ENCODE measurements at regions of chr22 and their contacts with region 1.

Region 1: GRCh38 chr22:28019881-28020871 is 101.1 kb upstream of the PITPNB start:
- DNase-seq: peak; percentile 65
- H3K4me3 Mint-ChIP-seq: no peak overlapping the region
- H3K27ac Mint-ChIP-seq: no peak overlapping the region
- H3K4me1 Mint-ChIP-seq: peaks cover 9% of the 10 kb centered on the region
- H3K27me3 Mint-ChIP-seq: no peaks in the 10 kb centered on the region

Region 2: DNA sequence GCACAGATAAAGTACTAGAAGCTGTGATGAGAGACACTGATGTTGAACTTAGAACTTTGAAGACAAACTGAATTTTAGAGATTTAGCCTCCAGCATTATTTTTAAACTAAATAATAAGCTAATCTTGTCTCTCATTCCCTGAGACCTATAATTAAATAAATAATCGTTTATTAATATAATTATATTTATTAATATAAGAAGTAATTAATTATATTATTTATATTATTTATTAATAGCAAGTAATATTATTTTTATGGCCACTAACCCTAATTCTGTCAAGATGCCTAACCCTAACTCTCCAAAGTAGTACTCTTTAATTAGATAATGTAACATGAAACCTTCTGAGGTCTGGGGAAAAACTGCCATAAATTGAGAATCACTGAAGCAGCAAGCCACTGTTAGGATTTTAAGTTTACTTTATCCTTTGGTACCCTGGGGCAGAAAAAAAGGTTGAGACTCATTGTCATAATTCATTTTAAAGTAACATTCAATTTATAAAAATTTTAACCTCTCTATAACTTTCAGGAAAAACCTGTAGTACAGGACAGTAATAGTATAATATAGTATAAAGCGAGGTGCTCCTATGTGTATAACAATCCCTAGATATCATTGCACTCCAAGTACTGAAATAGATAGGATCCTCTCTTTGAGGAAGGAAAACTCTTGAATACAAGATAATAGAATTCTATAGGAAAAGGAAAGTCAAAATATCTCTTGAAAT is 574.1 kb after region 1 on chr22:
- CTCF ChIA-PET with region 1: interaction called, 12 read pairs
- POLR2A ChIA-PET with region 1: no interaction called
- DNase-seq: no peak
- H3K4me3 Mint-ChIP-seq: no peak overlapping the region
- H3K27ac Mint-ChIP-seq: no peak overlapping the region
- H3K4me1 Mint-ChIP-seq: no peaks in the 10 kb centered on the region
- H3K27me3 Mint-ChIP-seq: peaks cover 17% of the 10 kb centered on the region

Measured in activated CD4-positive, alpha-beta memory T cell treated with anti-CD3 and anti-CD28 coated beads, Interleukin-2, amount 10 ng/mL, durations not matched to agents 7 days and 5 days (primary cell).